ENCODE measurements at regions of chr7 and their contacts with region 1.

Region 1: GRCh38 chr7:24406053-24406788 is 122.2 kb downstream of the NPY start:
- DNase-seq: no peak
- H3K4me3 ChIP-seq: no peak overlapping the region
- H3K27ac ChIP-seq: no peak overlapping the region
- H3K4me1 ChIP-seq: no peaks in the 10 kb centered on the region
- H3K27me3 ChIP-seq: no peaks in the 10 kb centered on the region
- CTCF ChIP-seq: no peak
- POLR2A ChIP-seq: no peak

Region 2: GRCh38 chr7:24199978-24200377 is 206.2 kb before region 1 on chr7:
- intact Hi-C with region 1: loop called (anchors 5 kb)
- DNase-seq: no peak
- H3K4me3 ChIP-seq: no peak overlapping the region
- H3K27ac ChIP-seq: no peak overlapping the region
- H3K4me1 ChIP-seq: no peaks in the 10 kb centered on the region
- H3K27me3 ChIP-seq: no peaks in the 10 kb centered on the region
- CTCF ChIP-seq: no peak
- POLR2A ChIP-seq: no peak

Region 3: DNA sequence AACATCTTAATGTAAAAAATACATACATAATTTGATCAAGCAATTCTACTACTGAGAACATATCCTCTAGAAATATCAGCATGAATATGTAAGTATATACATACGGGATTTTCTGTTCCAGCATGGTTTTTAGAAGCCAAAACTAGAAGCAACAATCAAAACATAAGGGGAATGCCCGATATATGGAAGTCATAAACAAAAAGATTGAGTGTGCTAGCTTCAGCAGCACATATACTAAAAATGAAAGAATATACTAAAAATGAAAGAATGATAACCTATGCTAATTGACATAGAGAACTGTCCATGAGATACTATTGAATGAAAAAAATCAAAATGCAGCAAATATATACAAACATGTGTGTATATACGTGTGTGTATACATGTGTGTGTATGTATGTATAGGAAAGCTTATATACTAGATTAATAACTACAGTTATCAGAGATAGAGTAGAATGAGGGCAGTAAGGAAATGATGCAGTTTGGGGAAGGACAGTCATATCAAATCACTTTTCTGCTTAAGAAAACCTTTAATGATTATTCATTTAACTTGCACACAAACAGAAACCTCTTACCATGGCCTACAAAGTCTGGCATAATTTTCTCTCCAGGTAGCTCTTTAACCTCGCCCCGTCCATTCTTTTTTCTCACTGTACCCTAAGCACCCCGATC is 49.4 kb before region 1 on chr7:
- intact Hi-C with region 1: no loop called
- DNase-seq: no peak
- H3K4me3 ChIP-seq: no peak overlapping the region
- H3K27ac ChIP-seq: no peak overlapping the region
- H3K4me1 ChIP-seq: no peaks in the 10 kb centered on the region
- H3K27me3 ChIP-seq: no peaks in the 10 kb centered on the region
- CTCF ChIP-seq: no peak
- POLR2A ChIP-seq: no peak

Region 4: GRCh38 chr7:24926623-24927524 is 520.7 kb after region 1 on chr7:
- intact Hi-C with region 1: loop called (anchors 5 kb)
- DNase-seq: no peak
- H3K4me3 ChIP-seq: no peak overlapping the region
- H3K27ac ChIP-seq: no peak overlapping the region
- H3K4me1 ChIP-seq: no peaks in the 10 kb centered on the region
- H3K27me3 ChIP-seq: no peaks in the 10 kb centered on the region
- CTCF ChIP-seq: no peak
- POLR2A ChIP-seq: no peak

Measured in breast epithelium (tissue), 4 donors.